ENCODE measurements at regions of chr1 and their contacts with region 1.

Region 1: GRCh38 chr1:230084138-230084880 is 17.3 kb downstream of the GALNT2 start:
- DNase-seq: peak; percentile 86
- H3K4me3 Mint-ChIP-seq: peak overlapping the region; percentile 61
- H3K27ac Mint-ChIP-seq: peak overlapping the region; percentile 96
- H3K4me1 Mint-ChIP-seq: peaks cover 71% of the 10 kb centered on the region
- H3K27me3 Mint-ChIP-seq: no peaks in the 10 kb centered on the region
- CTCF ChIP-seq: no peak

Region 2: DNA sequence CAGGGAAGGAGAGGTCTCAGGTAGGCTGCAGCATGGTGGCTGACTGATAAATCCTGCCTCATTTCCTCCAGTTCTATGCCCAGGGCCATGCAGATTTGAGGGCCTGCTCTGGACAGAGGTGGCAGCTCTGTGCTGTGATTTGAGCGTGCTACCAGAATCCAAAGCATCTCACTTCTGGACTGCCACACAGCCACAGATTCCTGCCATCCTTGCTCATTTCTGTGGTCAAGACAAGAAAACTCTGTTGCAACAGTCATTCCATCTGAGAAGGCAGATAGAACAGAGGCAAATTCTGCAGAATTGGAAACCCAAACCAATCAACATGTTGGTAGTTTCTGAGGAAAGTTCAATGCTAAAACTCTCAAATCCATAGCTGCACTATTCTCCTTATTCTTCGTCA is 120.0 kb before region 1 on chr1:
- CTCF ChIA-PET with region 1: no interaction called
- intact Hi-C with region 1: no loop called
- DNase-seq: no peak
- H3K4me3 Mint-ChIP-seq: no peak overlapping the region
- H3K27ac Mint-ChIP-seq: no peak overlapping the region
- H3K4me1 Mint-ChIP-seq: no peaks in the 10 kb centered on the region
- H3K27me3 Mint-ChIP-seq: peaks cover 64% of the 10 kb centered on the region
- CTCF ChIP-seq: no peak

Region 3: GRCh38 chr1:229993060-229993459 is 91.2 kb before region 1 on chr1:
- CTCF ChIA-PET with region 1: no interaction called
- intact Hi-C with region 1: no loop called
- DNase-seq: no peak
- H3K4me3 Mint-ChIP-seq: no peak overlapping the region
- H3K27ac Mint-ChIP-seq: no peak overlapping the region
- H3K4me1 Mint-ChIP-seq: no peaks in the 10 kb centered on the region
- H3K27me3 Mint-ChIP-seq: peaks cover 27% of the 10 kb centered on the region
- CTCF ChIP-seq: no peak

Region 4: DNA sequence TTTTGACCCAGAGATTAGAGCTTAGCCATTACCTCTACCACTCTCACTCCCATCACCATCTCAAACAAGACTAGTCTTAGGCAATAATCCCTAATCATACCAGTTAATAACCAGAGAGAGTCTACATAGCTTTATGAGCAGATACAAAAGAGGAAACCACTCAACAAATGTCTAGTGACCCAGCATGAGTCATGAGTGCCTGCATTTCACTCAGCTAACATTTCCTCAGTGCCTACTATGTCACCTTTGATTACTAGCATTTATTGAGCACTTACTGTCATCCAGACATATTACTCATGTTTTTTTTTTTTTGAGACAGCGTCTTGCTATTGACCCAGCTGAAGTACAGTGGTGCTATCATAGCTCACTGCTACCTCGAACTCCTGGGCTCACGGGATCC is 53.2 kb before region 1 on chr1:
- CTCF ChIA-PET with region 1: no interaction called
- intact Hi-C with region 1: no loop called
- DNase-seq: no peak
- H3K4me3 Mint-ChIP-seq: no peak overlapping the region
- H3K27ac Mint-ChIP-seq: no peak overlapping the region
- H3K4me1 Mint-ChIP-seq: peaks cover 6% of the 10 kb centered on the region
- H3K27me3 Mint-ChIP-seq: no peaks in the 10 kb centered on the region
- CTCF ChIP-seq: no peak

Region 5: GRCh38 chr1:230066466-230067404 is 17.6 kb before region 1 on chr1 and contains the start of gene GALNT2:
- CTCF ChIA-PET with region 1: no interaction called
- intact Hi-C with region 1: loop called (anchors 2 kb)
- DNase-seq: peak; percentile 94
- H3K4me3 Mint-ChIP-seq: peak within 1 kb of the TSS; percentile 99
- H3K27ac Mint-ChIP-seq: peak within 1 kb of the TSS; percentile 54
- H3K4me1 Mint-ChIP-seq: peaks cover 33% of the 10 kb centered on the region
- H3K27me3 Mint-ChIP-seq: no peaks in the 10 kb centered on the region
- CTCF ChIP-seq: no peak
- total RNA-seq, gene GALNT2: 136 and 141 TPM in 2 replicates

Region 6: DNA sequence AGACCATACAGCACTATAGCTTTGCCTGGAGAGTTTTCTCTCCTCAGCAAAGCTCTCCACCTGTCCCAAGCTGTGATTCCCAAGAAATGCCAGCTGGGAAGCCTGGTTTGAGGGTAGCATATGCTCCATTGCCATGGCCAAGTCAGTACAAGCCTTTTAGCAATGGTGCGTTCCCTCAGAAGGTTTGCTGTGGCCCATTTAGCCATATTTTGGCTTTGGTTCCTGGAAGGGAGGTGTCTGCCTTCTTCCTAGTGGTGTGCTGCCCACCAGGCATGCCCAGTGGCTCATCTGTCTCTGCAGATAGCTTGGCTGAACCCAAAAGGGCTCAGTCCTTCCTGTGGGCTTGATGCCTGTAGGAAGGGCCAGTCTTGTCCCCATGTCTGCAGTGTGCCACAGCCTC is 15.2 kb after region 1 on chr1:
- CTCF ChIA-PET with region 1: interaction called, 3 read pairs
- intact Hi-C with region 1: loop called (anchors 1 kb)
- DNase-seq: no peak
- H3K4me3 Mint-ChIP-seq: no peak overlapping the region
- H3K27ac Mint-ChIP-seq: no peak overlapping the region
- H3K4me1 Mint-ChIP-seq: peaks cover 37% of the 10 kb centered on the region
- H3K27me3 Mint-ChIP-seq: no peaks in the 10 kb centered on the region
- CTCF ChIP-seq: no peak